Activated naive CD8-positive, alpha-beta T cell treated with anti-CD3 and anti-CD28 coated beads, Interleukin-2, amount 10 ng/mL, durations not matched to agents 7 days and 5 days (primary cell): ENCODE measurements at regions of chr11 and their contacts with region 1.

Region 1: GRCh38 chr11:93741094-93741881 is at the starts of genes C11orf54 and TAF1D:
- DNase-seq: peak; percentile 91
- ATAC-seq: peak; percentile 90
- H3K4me3 Mint-ChIP-seq: peak within 1 kb of the TSS; percentile 99
- H3K27ac Mint-ChIP-seq: peak within 1 kb of the TSS; percentile 99
- H3K4me1 Mint-ChIP-seq: peaks cover 38% of the 10 kb centered on the region
- H3K27me3 Mint-ChIP-seq: no peaks in the 10 kb centered on the region
- total RNA-seq, gene C11orf54: 20.6 to 29.2 TPM
- total RNA-seq, gene TAF1D: 172 to 178 TPM

Region 2: DNA sequence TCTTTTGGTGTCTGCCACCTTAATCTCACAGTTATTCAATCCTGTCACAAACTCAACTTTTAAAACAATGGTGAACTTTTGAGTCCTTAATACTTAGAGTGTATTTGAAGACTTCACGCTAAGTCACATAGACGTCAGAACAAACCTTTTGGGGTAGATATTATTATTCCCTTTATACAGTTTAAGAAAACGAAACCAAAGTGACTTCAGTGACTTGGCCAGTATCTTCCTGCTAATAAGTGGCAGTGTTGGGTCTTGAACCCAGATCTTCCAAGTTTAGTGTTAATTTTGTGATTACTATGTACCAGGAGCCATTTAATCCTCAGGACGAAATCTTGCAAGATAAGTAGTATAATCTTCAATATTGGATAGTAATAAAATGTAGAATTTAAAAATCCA is 79.1 kb before region 1 on chr11:
- POLR2A ChIA-PET with region 1: interaction called, 17 read pairs
- DNase-seq: no peak
- ATAC-seq: no peak
- H3K4me3 Mint-ChIP-seq: peak overlapping the region; percentile 84
- H3K27ac Mint-ChIP-seq: peak overlapping the region; percentile 81
- H3K4me1 Mint-ChIP-seq: peaks cover 26% of the 10 kb centered on the region
- H3K27me3 Mint-ChIP-seq: peaks cover 3% of the 10 kb centered on the region

Region 3: GRCh38 chr11:93730108-93731107 is 10.9 kb before region 1 on chr11:
- POLR2A ChIA-PET with region 1: interaction called, 18 read pairs
- DNase-seq: no peak
- ATAC-seq: no peak
- H3K4me3 Mint-ChIP-seq: no peak overlapping the region
- H3K27ac Mint-ChIP-seq: peak overlapping the region; percentile 42
- H3K4me1 Mint-ChIP-seq: peaks cover 28% of the 10 kb centered on the region
- H3K27me3 Mint-ChIP-seq: no peaks in the 10 kb centered on the region

Region 4: GRCh38 chr11:93784152-93784934 is 43.1 kb after region 1 on chr11 and contains the start of gene MED17:
- POLR2A ChIA-PET with region 1: interaction called, 113 read pairs
- DNase-seq: peak; percentile 84
- ATAC-seq: peak; percentile 92
- H3K4me3 Mint-ChIP-seq: peak within 1 kb of the TSS; percentile 97
- H3K27ac Mint-ChIP-seq: peak within 1 kb of the TSS; percentile 92
- H3K4me1 Mint-ChIP-seq: peaks cover 33% of the 10 kb centered on the region
- H3K27me3 Mint-ChIP-seq: no peaks in the 10 kb centered on the region
- total RNA-seq, gene MED17: 43.0 to 44.8 TPM

Region 5: GRCh38 chr11:93791493-93791892 is 50.2 kb after region 1 on chr11:
- POLR2A ChIA-PET with region 1: interaction called, 10 read pairs
- DNase-seq: no peak
- ATAC-seq: no peak
- H3K4me3 Mint-ChIP-seq: no peak overlapping the region
- H3K27ac Mint-ChIP-seq: no peak overlapping the region
- H3K4me1 Mint-ChIP-seq: peaks cover 18% of the 10 kb centered on the region
- H3K27me3 Mint-ChIP-seq: no peaks in the 10 kb centered on the region

Region 6: GRCh38 chr11:94128746-94129511 is 387.6 kb after region 1 on chr11 and contains the start of gene PANX1:
- POLR2A ChIA-PET with region 1: interaction called, 10 read pairs
- DNase-seq: peak; percentile 81
- ATAC-seq: peak; percentile 86
- H3K4me3 Mint-ChIP-seq: peak within 1 kb of the TSS; percentile 88
- H3K27ac Mint-ChIP-seq: peak within 1 kb of the TSS; percentile 88
- H3K4me1 Mint-ChIP-seq: peaks cover 18% of the 10 kb centered on the region
- H3K27me3 Mint-ChIP-seq: peaks cover 4% of the 10 kb centered on the region
- total RNA-seq, gene PANX1: 9.4 to 9.8 TPM